Ovary (tissue), 10 donors: ENCODE measurements at regions of chr3 and their contacts with region 1.

Region 1: DNA sequence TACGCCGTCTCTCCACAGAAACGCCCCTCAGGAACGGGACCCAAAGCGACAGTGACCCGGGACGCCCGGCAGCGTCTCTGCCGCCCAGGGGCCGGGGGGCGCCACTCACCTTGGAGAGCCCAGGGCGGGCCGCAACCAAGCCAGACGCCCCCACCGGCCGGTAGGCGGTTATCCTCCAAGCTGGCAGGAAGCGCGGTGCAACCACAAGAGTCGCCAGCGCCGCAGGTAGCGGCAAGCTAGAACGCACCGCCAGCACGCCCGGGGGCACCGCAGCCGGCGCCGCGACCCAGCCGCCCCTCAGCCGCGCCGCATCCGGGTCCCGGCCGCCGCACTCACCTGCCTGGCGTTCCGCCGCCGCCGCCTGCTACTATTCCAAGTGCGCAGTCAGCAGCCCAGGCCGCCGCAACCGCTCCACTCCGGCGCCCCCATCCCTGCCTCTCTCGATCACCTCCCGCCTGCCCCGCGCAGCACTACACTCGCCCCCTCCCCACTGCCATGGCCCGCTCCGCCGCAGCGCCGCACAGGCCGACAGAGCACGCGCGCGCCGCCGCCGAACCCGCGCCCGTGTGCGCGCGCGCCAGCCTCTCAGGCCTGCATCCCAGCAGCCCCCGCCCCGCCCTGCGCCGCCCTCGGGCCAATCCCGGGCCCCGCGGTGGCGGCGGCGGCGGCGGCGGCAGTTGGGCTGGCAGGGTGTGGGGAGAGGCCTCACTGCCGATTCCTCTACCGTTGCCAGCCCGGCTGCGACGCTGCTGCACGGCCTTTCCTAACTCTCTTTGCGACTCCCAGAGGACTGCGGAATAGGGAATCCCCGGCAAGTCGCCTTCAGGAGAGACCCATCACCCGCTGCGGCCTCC is at the start of gene PIK3CB:
- DNase-seq: peak; percentile 87 to 93 (median 90)
- H3K4me3 ChIP-seq: peak within 1 kb of the TSS; percentile 65
- H3K27ac ChIP-seq: peak within 1 kb of the TSS; percentile 95
- H3K4me1 ChIP-seq: peaks cover 2% of the 10 kb centered on the region
- H3K27me3 ChIP-seq: no peaks in the 10 kb centered on the region
- CTCF ChIP-seq: peak in 2 of 3 donors; percentile 12 to 55
- EP300 ChIP-seq: no peak
- POLR2A ChIP-seq: no peak
- total RNA-seq, gene PIK3CB: 14.4 to 27.1 (median 21.0) TPM

Region 2: DNA sequence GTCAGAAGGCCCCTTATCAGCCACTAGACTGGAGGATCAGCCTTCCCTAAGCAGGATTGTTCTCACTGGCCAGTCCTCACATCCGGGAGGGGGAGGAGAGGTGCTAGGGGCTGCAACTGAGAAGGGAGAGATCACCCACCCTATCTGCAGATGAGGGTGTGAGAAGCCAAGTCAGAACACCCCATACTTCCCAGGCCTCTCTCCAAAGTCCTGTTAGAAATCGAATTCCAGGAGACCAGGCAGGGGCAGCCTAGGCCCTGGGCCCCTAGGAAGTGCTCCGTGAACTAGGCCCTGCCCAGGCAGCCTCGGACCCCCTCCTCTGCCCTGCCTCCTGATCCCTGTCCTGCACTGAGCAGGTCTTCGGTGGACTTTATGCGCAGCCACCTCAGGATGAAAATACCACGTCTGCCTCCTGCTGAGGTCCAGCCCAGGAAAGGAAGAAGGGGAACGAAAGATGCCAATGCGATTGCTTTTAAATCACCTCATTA is 720.1 kb before region 1 on chr3:
- intact Hi-C with region 1: no loop called
- DNase-seq: peak in 4 of 5 donors; percentile 24 to 53 (median 41)
- H3K4me3 ChIP-seq: peak overlapping the region; percentile 73
- H3K27ac ChIP-seq: peak overlapping the region; percentile 52 to 93
- H3K4me1 ChIP-seq: peaks cover 4% of the 10 kb centered on the region
- H3K27me3 ChIP-seq: no peaks in the 10 kb centered on the region
- CTCF ChIP-seq: no peak
- EP300 ChIP-seq: no peak
- POLR2A ChIP-seq: no peak

Region 3: DNA sequence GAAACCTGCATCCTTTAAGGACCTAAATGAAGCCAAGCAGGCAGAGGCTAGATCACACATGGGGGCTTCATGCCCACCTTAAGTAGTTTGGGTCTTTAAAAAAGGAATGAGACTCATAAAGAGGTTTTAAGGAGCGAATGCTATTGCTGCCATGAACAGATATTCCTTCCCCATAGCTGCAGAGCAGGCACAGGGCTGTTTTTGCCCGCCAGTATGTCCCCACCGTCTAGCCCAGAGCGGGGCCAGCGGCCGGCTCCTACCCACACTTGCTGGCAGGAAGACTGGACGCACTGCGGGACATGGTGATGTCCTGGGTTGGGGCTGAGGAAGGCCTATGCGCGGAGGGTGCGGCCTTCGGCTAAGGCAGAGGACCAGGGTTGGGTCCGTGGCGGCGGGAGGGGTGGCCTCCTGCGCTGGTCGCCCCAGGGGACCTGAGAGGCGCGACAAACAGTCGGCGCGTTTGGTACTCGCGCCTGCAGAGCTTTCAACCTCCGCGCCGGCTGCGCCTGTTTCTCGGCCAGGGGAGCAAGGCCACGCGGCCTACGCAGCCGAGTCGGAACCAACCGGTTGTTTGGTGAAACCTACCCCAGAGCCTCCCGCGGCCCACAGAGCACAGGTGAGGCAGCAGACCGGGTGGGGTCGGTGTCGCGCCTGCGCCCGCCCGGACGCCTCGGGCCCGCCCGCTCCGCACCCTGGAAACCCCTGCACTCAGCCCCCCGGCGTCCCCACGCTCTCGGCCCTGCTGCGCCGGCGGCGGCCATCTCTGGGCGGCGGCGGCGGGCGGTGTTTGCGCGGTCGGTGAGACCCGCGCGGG is 226.1 kb before region 1 on chr3 and contains the start of gene FAIM:
- intact Hi-C with region 1: loop called in 1 of 4 experiments (anchors 10 kb)
- DNase-seq: peak; percentile 63 to 85 (median 73)
- H3K4me3 ChIP-seq: peak within 1 kb of the TSS; percentile 83
- H3K27ac ChIP-seq: peak within 1 kb of the TSS; percentile 91 to 98
- H3K4me1 ChIP-seq: no peaks in the 10 kb centered on the region
- H3K27me3 ChIP-seq: no peaks in the 10 kb centered on the region
- CTCF ChIP-seq: no peak
- EP300 ChIP-seq: no peak
- POLR2A ChIP-seq: peak; percentile 22
- total RNA-seq, gene FAIM: 7.2 to 27.5 (median 9.2) TPM

Region 4: DNA sequence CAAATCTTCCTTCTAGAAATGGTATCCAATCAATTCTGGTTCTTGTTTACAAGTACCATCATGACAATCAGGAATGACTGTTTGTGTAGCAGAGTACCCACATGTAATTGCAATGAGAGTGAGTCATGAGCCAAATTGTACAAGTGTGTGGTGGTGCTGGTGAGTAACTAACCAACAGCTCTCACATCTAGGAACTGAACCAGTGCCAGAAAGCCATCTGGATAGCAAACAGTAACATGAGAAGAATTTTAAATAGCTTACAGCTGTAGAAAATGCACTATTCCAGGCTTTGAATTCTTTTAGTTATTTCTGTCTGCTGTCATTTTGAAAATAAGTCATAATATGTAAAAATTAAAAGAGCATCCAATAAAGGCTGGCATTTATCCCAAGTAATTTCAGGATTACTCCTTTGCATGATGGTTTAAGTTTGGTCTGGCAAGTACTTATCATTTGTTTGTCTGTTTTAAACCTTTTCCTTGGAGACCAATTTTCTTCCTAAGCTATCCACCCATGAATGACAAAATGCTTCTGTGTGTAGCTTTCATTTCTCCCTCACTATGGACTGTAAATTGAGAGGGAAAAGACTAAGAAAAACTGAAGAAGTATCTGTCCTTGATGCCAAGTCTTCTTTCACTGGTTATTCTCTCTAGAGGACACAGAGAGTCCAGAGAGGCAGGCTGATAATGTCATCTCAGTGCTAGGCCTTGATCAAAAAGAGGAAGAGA is 59.9 kb before region 1 on chr3:
- intact Hi-C with region 1: loop called in 1 of 4 experiments (anchors 10 kb)
- DNase-seq: peak in 4 of 5 donors; percentile 36 to 75 (median 61)
- H3K4me3 ChIP-seq: no peak overlapping the region
- H3K27ac ChIP-seq: peak overlapping the region in 1 of 2 donors; percentile 2
- H3K4me1 ChIP-seq: peaks cover 3% of the 10 kb centered on the region
- H3K27me3 ChIP-seq: no peaks in the 10 kb centered on the region
- CTCF ChIP-seq: no peak
- EP300 ChIP-seq: no peak
- POLR2A ChIP-seq: no peak

Region 5: DNA sequence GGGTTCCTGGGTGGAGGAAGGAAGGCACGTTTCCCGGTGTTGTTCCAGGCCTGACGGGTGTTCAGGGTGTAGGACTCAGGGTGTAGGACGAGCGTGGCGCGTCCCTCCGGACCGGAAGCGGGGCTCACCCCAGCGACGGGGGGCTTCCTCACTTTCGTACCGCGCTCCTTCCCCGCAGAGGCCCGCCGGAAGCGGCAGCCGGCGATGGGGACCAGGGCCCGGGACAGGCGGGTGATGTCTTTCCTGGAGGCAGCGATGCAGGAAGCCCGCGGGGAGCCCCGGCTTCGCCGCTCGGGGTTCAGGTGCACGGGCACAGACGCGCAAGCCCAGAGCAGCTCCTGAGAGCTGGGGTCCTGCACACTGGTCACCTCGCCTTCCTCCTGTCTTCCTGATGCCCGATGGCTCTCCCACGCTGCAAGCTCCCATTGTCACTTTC is 125.8 kb after region 1 on chr3:
- intact Hi-C with region 1: no loop called
- DNase-seq: peak in 4 of 5 donors; percentile 33 to 59 (median 54)
- H3K4me3 ChIP-seq: peak overlapping the region; percentile 27
- H3K27ac ChIP-seq: peak overlapping the region in 1 of 2 donors; percentile 6
- H3K4me1 ChIP-seq: no peaks in the 10 kb centered on the region
- H3K27me3 ChIP-seq: no peaks in the 10 kb centered on the region
- CTCF ChIP-seq: no peak
- EP300 ChIP-seq: no peak
- POLR2A ChIP-seq: no peak